Activated T-helper 1 cell treated with anti-CD3 and anti-CD28 coated beads, Interleukin-12 subunit alpha, Interleukin-12 subunit beta, Interleukin-2, Interleukin-4 antibody, amounts not matched to agents 30 ng/mL and 10 ng/mL and 1 ng/mL, durations not matched to agents 14 hours and 24 hours and 36 hours (primary cell): ENCODE measurements at regions of chr4 and their contacts with region 1.

Region 1: DNA sequence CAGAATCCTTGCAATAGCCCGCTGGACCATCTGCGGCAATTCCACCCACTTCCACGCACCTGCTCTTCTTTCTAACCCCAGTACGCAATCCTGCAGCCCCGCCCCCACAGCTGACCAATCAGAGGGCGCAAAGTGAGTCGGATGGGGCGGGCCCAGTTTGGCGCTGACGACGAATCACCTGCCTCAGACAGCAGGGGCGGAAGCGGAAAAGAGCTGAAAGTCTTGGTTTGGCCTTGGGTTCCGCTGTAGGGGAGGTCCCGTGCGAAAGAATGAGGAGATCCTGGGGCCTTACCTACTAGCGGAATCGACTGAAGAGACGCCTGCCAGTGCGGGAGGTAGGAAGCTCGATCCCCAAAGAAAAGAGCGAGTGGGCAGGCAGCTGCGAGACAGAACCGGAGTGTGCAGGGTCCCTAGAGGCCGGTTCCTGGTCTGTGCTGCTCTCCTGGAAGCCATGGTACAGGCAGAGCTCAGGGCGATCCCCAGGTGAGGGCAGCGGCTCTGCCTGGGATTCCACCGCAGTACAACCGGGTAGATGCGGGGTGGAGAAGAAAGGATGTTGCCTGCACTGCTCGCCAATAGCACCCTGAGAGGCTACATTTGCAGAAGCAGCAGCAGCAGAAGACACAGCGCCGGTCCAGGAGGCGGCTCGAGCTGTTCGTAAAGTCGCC is at the start of gene TMEM184C:
- DNase-seq: peak; percentile 97
- H3K4me3 Mint-ChIP-seq: peak within 1 kb of the TSS; percentile 92
- H3K27ac Mint-ChIP-seq: peak within 1 kb of the TSS; percentile 89
- H3K4me1 Mint-ChIP-seq: peaks cover 26% of the 10 kb centered on the region
- H3K27me3 Mint-ChIP-seq: peaks cover 7% of the 10 kb centered on the region
- total RNA-seq, gene TMEM184C: 21.6 and 22.7 TPM in 2 replicates

Region 2: GRCh38 chr4:147480891-147481576 is 136.3 kb before region 1 on chr4 and contains the start of gene EDNRA:
- intact Hi-C with region 1: no loop called
- DNase-seq: no peak
- H3K4me3 Mint-ChIP-seq: no peak within 1 kb of the TSS
- H3K27ac Mint-ChIP-seq: no peak within 1 kb of the TSS
- H3K4me1 Mint-ChIP-seq: no peaks in the 10 kb centered on the region
- H3K27me3 Mint-ChIP-seq: peaks cover 26% of the 10 kb centered on the region
- total RNA-seq, gene EDNRA: not detected in 2 replicates

Region 3: DNA sequence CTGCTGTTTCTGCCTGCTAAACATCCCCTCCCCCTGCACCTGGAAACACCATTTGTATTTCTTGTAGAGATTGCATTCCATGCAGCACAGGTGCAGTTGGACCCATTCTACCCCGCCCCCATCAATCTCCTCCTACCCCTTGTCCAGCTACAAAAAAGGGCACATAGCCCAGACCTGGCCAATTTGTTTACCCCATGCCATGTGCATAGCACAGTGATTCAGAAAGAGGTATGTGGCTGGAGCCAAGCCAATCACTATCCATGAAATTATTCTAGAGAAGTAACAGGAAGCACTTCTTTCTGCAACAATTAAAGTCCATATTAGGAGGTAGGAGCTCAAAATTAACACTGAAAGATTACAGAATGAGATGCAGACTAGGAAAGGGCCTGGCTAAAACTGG is 20.3 kb before region 1 on chr4:
- intact Hi-C with region 1: no loop called
- DNase-seq: no peak
- H3K4me3 Mint-ChIP-seq: no peak overlapping the region
- H3K27ac Mint-ChIP-seq: no peak overlapping the region
- H3K4me1 Mint-ChIP-seq: no peaks in the 10 kb centered on the region
- H3K27me3 Mint-ChIP-seq: peaks cover 11% of the 10 kb centered on the region

Region 4: GRCh38 chr4:147638942-147639341 is 21.6 kb after region 1 on chr4:
- intact Hi-C with region 1: loop called (anchors 2 kb)
- DNase-seq: no peak
- H3K4me3 Mint-ChIP-seq: no peak overlapping the region
- H3K27ac Mint-ChIP-seq: no peak overlapping the region
- H3K4me1 Mint-ChIP-seq: peaks cover 6% of the 10 kb centered on the region
- H3K27me3 Mint-ChIP-seq: no peaks in the 10 kb centered on the region

Region 5: DNA sequence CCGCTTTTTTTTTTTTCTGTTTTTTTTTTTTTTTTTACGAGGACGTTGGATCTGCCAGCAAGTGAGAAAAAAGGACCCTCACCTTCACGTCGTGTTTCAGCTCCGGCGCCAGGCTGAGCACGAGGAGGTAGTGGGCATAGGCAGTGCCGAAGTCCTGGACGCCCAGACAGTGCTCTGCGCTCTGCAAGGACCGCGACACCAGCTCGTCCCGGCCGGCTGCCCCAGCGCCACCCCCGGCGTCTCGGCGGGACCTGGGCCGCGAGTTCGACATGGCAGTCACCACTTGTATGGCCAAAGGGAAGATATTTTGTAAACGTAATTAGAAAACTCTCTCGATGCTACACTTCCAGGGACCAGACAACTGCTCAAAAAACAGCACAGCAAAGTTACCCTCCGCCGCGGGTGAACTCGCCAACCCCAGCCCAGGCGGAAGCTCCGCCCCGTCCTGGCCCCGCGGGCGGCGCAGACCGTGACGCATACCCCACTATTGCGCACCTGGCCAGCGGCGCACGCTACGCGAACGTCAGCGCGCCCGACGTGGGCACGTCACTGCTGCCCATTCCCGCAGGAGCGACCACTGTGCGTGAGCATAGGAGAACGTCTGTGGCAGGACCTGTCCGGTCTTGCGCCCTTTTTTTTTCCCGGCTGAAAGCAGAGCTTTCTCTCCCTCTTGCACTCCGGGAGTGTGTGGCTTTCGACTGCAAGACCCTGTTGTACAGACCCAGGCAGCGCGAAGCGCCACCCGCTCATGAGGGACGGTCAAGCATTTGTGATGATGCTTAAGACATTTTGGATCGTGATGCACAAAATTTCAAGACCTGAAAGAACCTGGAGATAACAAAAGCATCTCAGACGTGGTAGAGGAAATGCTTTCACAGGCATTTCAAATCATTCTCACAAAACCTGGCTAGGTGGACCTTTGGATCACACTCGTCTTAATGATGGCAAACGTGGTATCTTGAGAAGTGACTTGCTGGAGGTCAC is 66.7 kb after region 1 on chr4 and contains the start of gene PRMT9:
- intact Hi-C with region 1: loop called (anchors 1 kb)
- DNase-seq: peak; percentile 85
- H3K4me3 Mint-ChIP-seq: peak within 1 kb of the TSS; percentile 92
- H3K27ac Mint-ChIP-seq: peak within 1 kb of the TSS; percentile 92
- H3K4me1 Mint-ChIP-seq: peaks cover 30% of the 10 kb centered on the region
- H3K27me3 Mint-ChIP-seq: peaks cover 9% of the 10 kb centered on the region
- total RNA-seq, gene PRMT9: 6.8 and 7.4 TPM in 2 replicates

Region 6: GRCh38 chr4:147799986-147800555 is 182.8 kb after region 1 on chr4:
- intact Hi-C with region 1: loop called (anchors 2 kb)
- DNase-seq: peak; percentile 70
- H3K4me3 Mint-ChIP-seq: peak overlapping the region; percentile 65
- H3K27ac Mint-ChIP-seq: peak overlapping the region; percentile 66
- H3K4me1 Mint-ChIP-seq: peaks cover 58% of the 10 kb centered on the region
- H3K27me3 Mint-ChIP-seq: peaks cover 5% of the 10 kb centered on the region

Region 7: GRCh38 chr4:148056869-148057268 is 439.6 kb after region 1 on chr4:
- intact Hi-C with region 1: loop called (anchors 10 kb)
- DNase-seq: peak; percentile 34
- H3K4me3 Mint-ChIP-seq: no peak overlapping the region
- H3K27ac Mint-ChIP-seq: no peak overlapping the region
- H3K4me1 Mint-ChIP-seq: peaks cover 91% of the 10 kb centered on the region
- H3K27me3 Mint-ChIP-seq: no peaks in the 10 kb centered on the region